CD8-positive, alpha-beta T cell (primary cell): ENCODE measurements at regions of chr3 and their contacts with region 1.

Region 1: GRCh38 chr3:146640955-146641867 is 36.1 kb upstream of the PLSCR5 start:
- DNase-seq: peak in 2 of 9 experiments; percentile 15 to 32
- ATAC-seq: no peak
- H3K4me3 ChIP-seq: no peak overlapping the region
- H3K4me3 Mint-ChIP-seq: no peak overlapping the region
- H3K27ac ChIP-seq: no peak overlapping the region
- H3K27ac Mint-ChIP-seq: no peak overlapping the region
- H3K4me1 ChIP-seq: no peaks in the 10 kb centered on the region
- H3K4me1 Mint-ChIP-seq: no peaks in the 10 kb centered on the region
- H3K27me3 ChIP-seq: no peaks in the 10 kb centered on the region
- H3K27me3 Mint-ChIP-seq: no peaks in the 10 kb centered on the region
- CTCF ChIP-seq: peak; percentile 50

Region 2: DNA sequence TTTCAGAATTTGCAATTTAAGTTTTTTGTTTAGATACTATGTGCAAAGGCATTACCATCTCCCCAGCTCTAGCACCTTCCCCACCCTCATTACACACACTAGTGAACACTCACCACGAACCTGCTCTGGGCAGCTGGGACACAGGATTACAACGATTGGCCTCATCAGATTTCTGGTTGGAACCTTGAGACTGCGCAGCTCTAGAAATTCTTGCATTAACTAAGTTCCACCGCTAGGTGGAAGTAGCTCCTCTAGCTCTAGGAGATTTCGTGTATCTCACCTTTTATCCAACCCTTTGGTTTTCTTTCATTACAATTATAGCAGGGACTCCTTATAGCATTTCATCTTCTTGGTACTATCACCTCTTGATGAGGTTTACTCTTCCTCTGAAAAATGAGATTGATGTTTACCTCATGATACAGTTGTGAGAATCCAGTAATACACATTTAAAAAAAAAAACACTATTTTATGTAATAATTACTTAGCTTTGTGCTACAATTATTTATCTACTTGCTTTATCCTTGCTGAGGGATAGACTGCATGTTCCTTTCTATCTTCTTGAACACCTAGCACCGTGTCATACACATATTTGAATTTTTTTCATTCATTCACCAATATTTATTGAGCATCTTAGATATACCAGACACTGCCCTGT is 451.6 kb before region 1 on chr3:
- CTCF ChIA-PET with region 1: no interaction called
- POLR2A ChIA-PET with region 1: no interaction called
- intact Hi-C with region 1: loop called in 1 of 2 experiments (anchors 1 kb)
- DNase-seq: peak in 3 of 9 experiments; percentile 5 to 43 (median 33)
- ATAC-seq: peak; percentile 59
- H3K4me3 ChIP-seq: no peak overlapping the region
- H3K4me3 Mint-ChIP-seq: no peak overlapping the region
- H3K27ac ChIP-seq: no peak overlapping the region
- H3K27ac Mint-ChIP-seq: no peak overlapping the region
- H3K4me1 ChIP-seq: no peaks in the 10 kb centered on the region
- H3K4me1 Mint-ChIP-seq: no peaks in the 10 kb centered on the region
- H3K27me3 ChIP-seq: no peaks in the 10 kb centered on the region
- H3K27me3 Mint-ChIP-seq: peaks cover 6% of the 10 kb centered on the region
- CTCF ChIP-seq: peak; percentile 71

Region 3: DNA sequence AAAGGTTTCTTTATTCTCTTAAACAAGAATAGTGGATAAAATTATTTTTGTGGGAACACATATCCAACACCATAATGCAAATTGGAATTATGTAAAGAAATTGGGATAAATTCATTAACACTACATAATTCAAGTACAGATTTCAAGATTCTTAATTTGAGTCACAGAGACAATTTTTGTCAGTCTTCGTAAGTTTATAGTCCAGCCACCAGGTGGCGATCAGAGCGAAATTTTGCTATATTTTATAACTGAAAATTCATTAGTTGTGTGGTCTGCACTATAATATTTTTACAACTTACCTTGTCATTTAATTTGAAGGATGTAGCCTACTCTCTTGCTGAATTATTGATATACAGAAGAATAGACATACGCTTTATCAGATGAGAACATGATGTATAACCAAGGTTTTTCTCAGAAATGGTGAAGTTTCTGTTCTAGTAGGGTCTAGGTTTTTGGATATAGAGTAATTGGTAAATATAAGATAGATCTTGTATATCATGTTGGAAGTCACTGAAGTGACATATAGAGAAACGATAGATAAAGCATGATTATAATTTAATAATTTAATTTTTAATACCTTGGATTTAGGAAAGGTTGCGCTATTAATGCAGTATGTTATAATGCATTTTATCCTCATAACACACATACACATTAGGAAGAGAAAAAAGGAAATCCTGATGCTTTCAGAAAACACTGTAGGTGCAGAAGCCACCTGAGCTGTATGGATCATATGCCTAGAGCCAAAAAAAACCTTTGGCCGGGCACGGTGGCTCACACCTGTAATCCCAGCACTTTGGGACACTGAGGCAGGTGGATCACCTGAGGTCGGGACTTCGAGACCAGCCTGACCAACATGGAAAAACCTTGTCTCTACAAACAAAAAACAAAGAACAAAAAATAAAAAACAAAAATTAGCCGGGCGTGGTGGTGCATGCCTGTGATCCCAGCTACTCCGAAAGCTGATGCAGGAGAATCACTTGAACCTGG is 422.0 kb before region 1 on chr3:
- CTCF ChIA-PET with region 1: no interaction called
- POLR2A ChIA-PET with region 1: no interaction called
- intact Hi-C with region 1: loop called (anchors 1 to 5 kb)
- DNase-seq: peak in 8 of 9 experiments; percentile 1 to 52 (median 44)
- ATAC-seq: no peak
- H3K4me3 ChIP-seq: no peak overlapping the region
- H3K4me3 Mint-ChIP-seq: no peak overlapping the region
- H3K27ac ChIP-seq: no peak overlapping the region
- H3K27ac Mint-ChIP-seq: no peak overlapping the region
- H3K4me1 ChIP-seq: no peaks in the 10 kb centered on the region
- H3K4me1 Mint-ChIP-seq: no peaks in the 10 kb centered on the region
- H3K27me3 ChIP-seq: no peaks in the 10 kb centered on the region
- H3K27me3 Mint-ChIP-seq: peaks cover 5% of the 10 kb centered on the region
- CTCF ChIP-seq: peak; percentile 85